PC-3 (cell line): ENCODE measurements at regions of chr9 and their contacts with region 1.

Region 1: GRCh38 chr9:29285818-29286217 is 1712.5 kb upstream of the C9orf72 start:
- DNase-seq: peak; percentile 61
- ATAC-seq: peak; percentile 51
- H3K4me3 ChIP-seq: no peak overlapping the region
- H3K27ac ChIP-seq: 0 out of 2 replicates have a peak overlapping the region, but pooled peaks have one; percentile 8
- H3K4me1 ChIP-seq: peaks cover 37% of the 10 kb centered on the region
- H3K27me3 ChIP-seq: no peaks in the 10 kb centered on the region
- CTCF ChIP-seq: peak; percentile 74

Region 2: GRCh38 chr9:29332789-29333188 is 47.0 kb after region 1 on chr9:
- CTCF ChIA-PET with region 1: no interaction called
- POLR2A ChIA-PET with region 1: no interaction called
- intact Hi-C with region 1: no loop called
- DNase-seq: peak; percentile 79
- ATAC-seq: peak; percentile 88
- H3K4me3 ChIP-seq: no peak overlapping the region
- H3K27ac ChIP-seq: peak overlapping the region; percentile 63
- H3K4me1 ChIP-seq: peaks cover 12% of the 10 kb centered on the region
- H3K27me3 ChIP-seq: no peaks in the 10 kb centered on the region
- CTCF ChIP-seq: no peak

Region 3: GRCh38 chr9:29397148-29397547 is 111.3 kb after region 1 on chr9:
- CTCF ChIA-PET with region 1: no interaction called
- POLR2A ChIA-PET with region 1: no interaction called
- intact Hi-C with region 1: loop called (anchors 5 kb)
- DNase-seq: peak; percentile 78
- ATAC-seq: peak; percentile 82
- H3K4me3 ChIP-seq: peak overlapping the region; percentile 56
- H3K27ac ChIP-seq: peak overlapping the region; percentile 87
- H3K4me1 ChIP-seq: peaks cover 19% of the 10 kb centered on the region
- H3K27me3 ChIP-seq: no peaks in the 10 kb centered on the region
- CTCF ChIP-seq: no peak

Region 4: GRCh38 chr9:29439961-29440360 is 154.1 kb after region 1 on chr9:
- CTCF ChIA-PET with region 1: no interaction called
- POLR2A ChIA-PET with region 1: no interaction called
- intact Hi-C with region 1: loop called (anchors 10 kb)
- DNase-seq: peak; percentile 93
- ATAC-seq: peak; percentile 91
- H3K4me3 ChIP-seq: peak overlapping the region; percentile 64
- H3K27ac ChIP-seq: peak overlapping the region; percentile 100
- H3K4me1 ChIP-seq: peaks cover 46% of the 10 kb centered on the region
- H3K27me3 ChIP-seq: no peaks in the 10 kb centered on the region
- CTCF ChIP-seq: no peak

Region 5: GRCh38 chr9:29564564-29564963 is 278.7 kb after region 1 on chr9:
- CTCF ChIA-PET with region 1: no interaction called
- POLR2A ChIA-PET with region 1: no interaction called
- intact Hi-C with region 1: loop called (anchors 10 kb)
- DNase-seq: peak; percentile 45
- ATAC-seq: peak; percentile 79
- H3K4me3 ChIP-seq: no peak overlapping the region
- H3K27ac ChIP-seq: peak overlapping the region; percentile 13; the same call in 1 of the 2 replicates
- H3K4me1 ChIP-seq: peaks cover 9% of the 10 kb centered on the region; the same call in 1 of the 2 replicates
- H3K27me3 ChIP-seq: no peaks in the 10 kb centered on the region
- CTCF ChIP-seq: no peak

Region 6: GRCh38 chr9:29637448-29638237 is 351.8 kb after region 1 on chr9:
- CTCF ChIA-PET with region 1: no interaction called
- POLR2A ChIA-PET with region 1: no interaction called
- intact Hi-C with region 1: loop called (anchors 10 kb)
- DNase-seq: peak; percentile 76
- ATAC-seq: peak; percentile 89
- H3K4me3 ChIP-seq: peak overlapping the region; percentile 40; the same call in 1 of the 2 replicates
- H3K27ac ChIP-seq: peak overlapping the region; percentile 60
- H3K4me1 ChIP-seq: peaks cover 32% of the 10 kb centered on the region
- H3K27me3 ChIP-seq: no peaks in the 10 kb centered on the region
- CTCF ChIP-seq: no peak

Region 7: DNA sequence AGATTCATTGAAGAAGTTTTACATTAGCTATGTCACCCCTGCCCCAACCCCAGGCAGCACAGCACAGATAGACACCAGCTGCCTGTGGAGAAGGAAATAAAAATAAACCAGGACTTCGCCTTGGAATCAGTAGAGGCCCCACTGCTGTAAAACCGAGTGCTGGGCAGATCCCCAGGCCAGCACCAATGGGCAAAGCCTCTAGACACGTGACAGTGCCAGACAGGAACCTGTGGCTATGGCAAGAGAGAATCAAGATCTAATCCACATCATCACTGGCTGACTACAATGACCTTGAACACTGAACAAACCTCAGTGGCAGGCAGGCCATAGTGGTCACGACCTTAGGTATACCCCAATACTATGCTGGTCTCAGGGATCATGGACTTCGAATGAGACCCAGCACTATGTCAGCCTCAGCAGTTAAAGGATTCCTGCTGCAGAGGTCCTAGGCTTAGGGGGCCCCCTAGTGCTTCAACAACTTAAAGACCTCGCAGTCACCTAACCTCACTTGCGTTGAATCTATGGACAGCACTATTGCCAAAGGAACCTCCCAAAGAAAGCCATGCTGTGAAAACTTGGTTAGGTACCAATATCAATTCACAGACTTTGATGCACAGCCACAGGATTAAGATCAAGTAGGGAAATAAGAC is 406.1 kb after region 1 on chr9:
- CTCF ChIA-PET with region 1: no interaction called
- POLR2A ChIA-PET with region 1: no interaction called
- intact Hi-C with region 1: loop called (anchors 5 kb)
- DNase-seq: peak; percentile 63
- ATAC-seq: peak; percentile 53; the same call in 1 of the 2 replicates
- H3K4me3 ChIP-seq: no peak overlapping the region
- H3K27ac ChIP-seq: no peak overlapping the region
- H3K4me1 ChIP-seq: peaks cover 4% of the 10 kb centered on the region
- H3K27me3 ChIP-seq: no peaks in the 10 kb centered on the region
- CTCF ChIP-seq: peak; percentile 73